CD8-positive, alpha-beta T cell (primary cell): ENCODE measurements at regions of chr1 and their contacts with region 1.

Region 1: GRCh38 chr1:109075531-109076490 is at the start of gene TAF13:
- DNase-seq: peak; percentile 63 to 94 (median 86)
- ATAC-seq: peak; percentile 95
- H3K4me3 ChIP-seq: peak within 1 kb of the TSS; percentile 66 to 72
- H3K4me3 Mint-ChIP-seq: peak within 1 kb of the TSS; percentile 98
- H3K27ac ChIP-seq: peak within 1 kb of the TSS; percentile 93 to 97
- H3K27ac Mint-ChIP-seq: peak within 1 kb of the TSS; percentile 99
- H3K4me1 ChIP-seq: peaks cover 16% of the 10 kb centered on the region
- H3K4me1 Mint-ChIP-seq: peaks cover 23% of the 10 kb centered on the region
- H3K27me3 ChIP-seq: no peaks in the 10 kb centered on the region
- H3K27me3 Mint-ChIP-seq: no peaks in the 10 kb centered on the region
- CTCF ChIP-seq: no peak
- total RNA-seq, gene TAF13: 36.2 to 40.4 TPM

Region 2: GRCh38 chr1:109090196-109091077 is 14.6 kb after region 1 on chr1 and contains the start of gene TMEM167B:
- CTCF ChIA-PET with region 1: interaction called, 9 read pairs
- POLR2A ChIA-PET with region 1: interaction called, 20 read pairs
- intact Hi-C with region 1: loop called (anchors 1 kb)
- DNase-seq: peak; percentile 76 to 94 (median 88)
- ATAC-seq: peak; percentile 94
- H3K4me3 ChIP-seq: peak within 1 kb of the TSS; percentile 84 to 96
- H3K4me3 Mint-ChIP-seq: peak within 1 kb of the TSS; percentile 96
- H3K27ac ChIP-seq: peak within 1 kb of the TSS; percentile 82 to 98
- H3K27ac Mint-ChIP-seq: peak within 1 kb of the TSS; percentile 95
- H3K4me1 ChIP-seq: peaks cover 20% of the 10 kb centered on the region
- H3K4me1 Mint-ChIP-seq: peaks cover 33% of the 10 kb centered on the region
- H3K27me3 ChIP-seq: no peaks in the 10 kb centered on the region
- H3K27me3 Mint-ChIP-seq: no peaks in the 10 kb centered on the region
- CTCF ChIP-seq: no peak
- total RNA-seq, gene TMEM167B: 66.3 to 68.0 TPM

Region 3: GRCh38 chr1:109253484-109254141 is 177.8 kb after region 1 on chr1:
- CTCF ChIA-PET with region 1: no interaction called
- POLR2A ChIA-PET with region 1: no interaction called
- intact Hi-C with region 1: no loop called
- DNase-seq: peak in 1 of 9 experiments; percentile 10
- ATAC-seq: no peak
- H3K4me3 ChIP-seq: no peak overlapping the region
- H3K4me3 Mint-ChIP-seq: no peak overlapping the region
- H3K27ac ChIP-seq: no peak overlapping the region
- H3K27ac Mint-ChIP-seq: no peak overlapping the region
- H3K4me1 ChIP-seq: peaks cover 14% of the 10 kb centered on the region
- H3K4me1 Mint-ChIP-seq: peaks cover 17% of the 10 kb centered on the region
- H3K27me3 ChIP-seq: peaks cover 0 to 3% of the 10 kb centered on the region in 2 experiments
- H3K27me3 Mint-ChIP-seq: peaks cover 3% of the 10 kb centered on the region
- CTCF ChIP-seq: no peak